IMR-90 (cell line): ENCODE measurements at regions of chr3 and their contacts with region 1.

Region 1: DNA sequence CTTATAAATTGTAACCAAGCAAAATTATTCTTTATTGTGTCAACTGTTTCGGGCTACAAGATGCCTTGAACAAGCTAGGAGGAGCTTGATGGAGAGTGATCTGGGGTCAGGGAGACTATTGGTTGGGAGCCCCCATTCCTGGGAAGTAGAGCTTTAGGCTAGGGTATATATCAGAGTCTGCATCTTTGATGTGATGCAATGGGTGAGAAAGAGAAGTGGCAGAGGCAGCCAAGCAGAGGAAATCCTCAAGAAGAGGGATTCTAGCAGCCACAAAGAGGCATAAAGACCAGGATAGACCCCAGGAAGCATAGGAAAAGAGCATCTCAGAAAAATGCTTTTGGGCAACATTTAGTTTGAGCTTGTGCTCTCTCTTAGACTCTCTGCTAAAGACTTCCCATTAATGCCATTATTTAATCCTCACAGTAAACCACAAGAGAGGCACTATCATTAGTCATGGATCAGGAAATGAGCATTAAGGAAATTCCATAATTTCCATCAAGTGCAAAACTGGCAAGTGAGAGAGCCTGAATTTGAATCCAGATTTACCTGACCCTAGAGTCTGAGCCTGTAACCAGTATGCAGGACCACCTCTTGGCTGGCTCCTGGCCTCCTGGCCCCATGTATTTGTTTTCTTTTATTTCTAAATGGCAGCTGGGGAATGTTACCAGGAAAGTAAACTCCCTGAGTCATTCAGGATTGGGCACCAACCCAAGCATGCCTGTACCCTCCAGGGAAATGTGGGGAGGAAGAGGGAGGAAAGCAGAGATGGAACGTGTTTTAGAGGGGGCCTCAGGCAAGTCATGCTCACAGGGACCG is 118.7 kb downstream of the RPL22L1 start:
- DNase-seq: peak; percentile 82
- ATAC-seq: peak; percentile 57
- H3K4me3 ChIP-seq: no peak overlapping the region
- H3K27ac ChIP-seq: peak overlapping the region; percentile 97
- H3K4me1 ChIP-seq: peaks cover 28% of the 10 kb centered on the region
- H3K27me3 ChIP-seq: no peaks in the 10 kb centered on the region
- CTCF ChIP-seq: no peak
- POLR2A ChIP-seq: no peak
- RAD21 ChIP-seq: no peak

Region 2: DNA sequence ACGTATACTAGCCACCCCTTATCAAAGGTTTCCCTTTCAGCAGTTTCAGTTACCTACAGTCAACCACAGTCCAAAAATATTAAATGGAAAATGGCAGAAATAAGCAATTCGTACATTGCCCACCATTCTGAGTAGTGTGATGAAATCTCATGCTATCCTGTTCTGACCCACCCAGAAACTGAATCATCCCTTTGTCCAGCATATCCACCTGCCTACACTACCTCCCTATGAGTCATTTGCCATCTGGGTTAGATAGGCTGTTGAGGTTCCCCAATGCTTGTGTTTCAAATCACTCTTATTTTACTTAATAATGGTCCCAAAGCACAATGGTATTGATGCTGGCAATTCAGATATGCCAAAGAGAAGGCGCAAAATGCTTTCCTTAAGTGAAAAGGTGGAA is 554.5 kb before region 1 on chr3:
- CTCF ChIA-PET with region 1: no interaction called
- POLR2A ChIA-PET with region 1: no interaction called
- dilution Hi-C with region 1: no loop called
- in situ Hi-C with region 1: no loop called
- intact Hi-C with region 1: no loop called
- DNase-seq: peak; percentile 52
- ATAC-seq: no peak
- H3K4me3 ChIP-seq: no peak overlapping the region
- H3K27ac ChIP-seq: no peak overlapping the region
- H3K4me1 ChIP-seq: no peaks in the 10 kb centered on the region
- H3K27me3 ChIP-seq: no peaks in the 10 kb centered on the region
- CTCF ChIP-seq: no peak
- POLR2A ChIP-seq: no peak
- RAD21 ChIP-seq: no peak

Region 3: DNA sequence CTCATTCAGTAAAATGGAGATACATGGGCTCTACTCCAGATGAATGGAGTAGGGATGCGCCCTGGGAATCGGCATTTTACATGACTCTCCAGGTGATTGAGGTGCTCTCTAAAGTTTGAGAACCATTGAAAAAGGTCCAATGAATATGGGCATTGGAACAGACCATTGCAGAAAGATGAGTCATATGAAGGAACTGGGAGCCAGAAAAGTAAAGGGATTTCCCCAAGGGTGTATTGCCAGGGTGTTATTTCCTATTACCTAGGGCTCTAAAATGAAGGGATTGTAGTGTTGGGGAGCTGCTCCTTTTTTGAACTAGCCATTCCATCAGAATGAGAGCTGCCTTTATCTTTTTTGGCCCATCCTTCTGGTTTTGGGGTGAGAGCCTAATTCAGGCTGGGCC is 310.9 kb before region 1 on chr3:
- CTCF ChIA-PET with region 1: no interaction called
- POLR2A ChIA-PET with region 1: no interaction called
- dilution Hi-C with region 1: no loop called
- in situ Hi-C with region 1: no loop called
- intact Hi-C with region 1: loop called (anchors 5 kb)
- DNase-seq: peak; percentile 63
- ATAC-seq: peak; percentile 6
- H3K4me3 ChIP-seq: no peak overlapping the region
- H3K27ac ChIP-seq: no peak overlapping the region
- H3K4me1 ChIP-seq: peaks cover 6% of the 10 kb centered on the region; the same call in 1 of the 2 replicates
- H3K27me3 ChIP-seq: no peaks in the 10 kb centered on the region
- CTCF ChIP-seq: no peak
- POLR2A ChIP-seq: no peak
- RAD21 ChIP-seq: no peak

Region 4: GRCh38 chr3:170717410-170718402 is 33.6 kb before region 1 on chr3:
- CTCF ChIA-PET with region 1: no interaction called
- POLR2A ChIA-PET with region 1: interaction called, 4 read pairs
- dilution Hi-C with region 1: no loop called
- in situ Hi-C with region 1: no loop called
- intact Hi-C with region 1: loop called (anchors 1 kb)
- DNase-seq: peak; percentile 64
- ATAC-seq: no peak
- H3K4me3 ChIP-seq: no peak overlapping the region
- H3K27ac ChIP-seq: peak overlapping the region; percentile 15; the same call in 1 of the 2 replicates
- H3K4me1 ChIP-seq: peaks cover 8% of the 10 kb centered on the region
- H3K27me3 ChIP-seq: no peaks in the 10 kb centered on the region
- CTCF ChIP-seq: no peak
- POLR2A ChIP-seq: no peak
- RAD21 ChIP-seq: no peak

Region 5: GRCh38 chr3:170726976-170727661 is 24.2 kb before region 1 on chr3:
- CTCF ChIA-PET with region 1: interaction called, 3 read pairs
- POLR2A ChIA-PET with region 1: interaction called, 6 read pairs
- dilution Hi-C with region 1: no loop called
- in situ Hi-C with region 1: no loop called
- intact Hi-C with region 1: loop called (anchors 2 kb)
- DNase-seq: peak; percentile 94
- ATAC-seq: peak; percentile 59
- H3K4me3 ChIP-seq: no peak overlapping the region
- H3K27ac ChIP-seq: peak overlapping the region; percentile 99
- H3K4me1 ChIP-seq: peaks cover 26% of the 10 kb centered on the region
- H3K27me3 ChIP-seq: no peaks in the 10 kb centered on the region
- CTCF ChIP-seq: no peak
- POLR2A ChIP-seq: no peak
- RAD21 ChIP-seq: peak; percentile 17; the same call in 1 of the 2 replicates